Activated CD4-positive, alpha-beta memory T cell treated with anti-CD3 and anti-CD28 coated beads for 36 hours (primary cell): ENCODE measurements at regions of chr9 and their contacts with region 1.

Region 1: DNA sequence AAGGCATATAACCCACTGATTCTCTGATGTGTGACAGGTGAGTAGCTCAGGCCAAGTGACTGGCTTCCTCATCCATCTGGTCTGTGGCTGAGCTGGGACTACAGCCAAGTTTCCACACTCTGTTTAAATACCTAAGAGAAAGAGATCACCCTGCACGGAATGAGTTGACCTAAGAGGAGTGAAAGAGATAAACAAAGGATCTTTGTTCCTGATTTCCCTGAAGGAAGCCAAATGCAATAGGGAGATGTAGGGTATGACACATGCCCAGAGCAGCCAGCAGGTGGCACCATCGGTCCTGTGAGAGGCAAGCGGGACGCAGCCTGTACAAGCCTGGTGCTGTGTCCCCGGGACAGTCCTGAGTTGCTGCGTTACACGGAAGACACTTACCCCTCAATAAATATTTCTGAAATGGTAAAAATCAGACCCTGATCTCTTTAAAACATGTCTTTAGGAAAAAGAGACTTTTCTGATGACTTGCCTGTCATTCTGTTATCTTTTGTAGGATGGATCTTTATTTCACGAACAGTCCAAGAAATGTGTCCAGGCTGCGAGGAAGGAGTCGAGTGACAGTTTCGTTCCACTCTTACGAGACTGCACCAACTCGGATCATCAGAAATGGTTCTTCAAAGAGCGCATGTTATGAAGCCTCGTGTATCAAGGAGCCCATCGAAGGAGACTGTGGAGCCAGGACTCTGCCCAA is 41.1 kb downstream of the GALNT12 start:
- DNase-seq: peak; percentile 86
- H3K4me3 Mint-ChIP-seq: no peak overlapping the region
- H3K27ac Mint-ChIP-seq: no peak overlapping the region
- H3K4me1 Mint-ChIP-seq: peaks cover 10% of the 10 kb centered on the region
- H3K27me3 Mint-ChIP-seq: no peaks in the 10 kb centered on the region

Region 2: GRCh38 chr9:98830554-98830953 is 18.0 kb before region 1 on chr9:
- CTCF ChIA-PET with region 1: interaction called, 15 read pairs
- POLR2A ChIA-PET with region 1: no interaction called
- intact Hi-C with region 1: no loop called
- DNase-seq: no peak
- H3K4me3 Mint-ChIP-seq: no peak overlapping the region
- H3K27ac Mint-ChIP-seq: no peak overlapping the region
- H3K4me1 Mint-ChIP-seq: no peaks in the 10 kb centered on the region
- H3K27me3 Mint-ChIP-seq: no peaks in the 10 kb centered on the region

Region 3: DNA sequence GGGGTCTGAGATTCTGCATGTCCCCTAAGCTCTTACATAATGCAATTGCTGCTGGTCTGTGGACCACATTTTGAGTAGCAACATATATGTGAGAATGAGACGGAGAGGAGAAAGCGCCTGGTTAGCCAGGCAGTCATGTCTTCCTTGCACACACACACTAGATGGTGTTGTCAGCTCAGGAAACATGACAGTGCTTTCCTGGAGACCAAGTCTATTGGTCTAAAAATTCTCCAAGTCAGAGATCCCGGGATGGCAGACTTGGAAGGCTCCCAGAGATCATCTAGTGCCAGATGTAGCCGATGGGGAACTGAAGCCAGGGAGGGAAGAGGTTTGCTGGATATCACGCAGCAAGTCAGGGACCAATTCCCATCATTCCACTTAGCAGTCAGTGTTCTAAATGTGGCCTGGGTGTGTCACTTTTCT is 12.3 kb after region 1 on chr9:
- CTCF ChIA-PET with region 1: interaction called, 23 read pairs
- POLR2A ChIA-PET with region 1: no interaction called
- intact Hi-C with region 1: no loop called
- DNase-seq: no peak
- H3K4me3 Mint-ChIP-seq: no peak overlapping the region
- H3K27ac Mint-ChIP-seq: no peak overlapping the region
- H3K4me1 Mint-ChIP-seq: no peaks in the 10 kb centered on the region
- H3K27me3 Mint-ChIP-seq: peaks cover 23% of the 10 kb centered on the region

Region 4: DNA sequence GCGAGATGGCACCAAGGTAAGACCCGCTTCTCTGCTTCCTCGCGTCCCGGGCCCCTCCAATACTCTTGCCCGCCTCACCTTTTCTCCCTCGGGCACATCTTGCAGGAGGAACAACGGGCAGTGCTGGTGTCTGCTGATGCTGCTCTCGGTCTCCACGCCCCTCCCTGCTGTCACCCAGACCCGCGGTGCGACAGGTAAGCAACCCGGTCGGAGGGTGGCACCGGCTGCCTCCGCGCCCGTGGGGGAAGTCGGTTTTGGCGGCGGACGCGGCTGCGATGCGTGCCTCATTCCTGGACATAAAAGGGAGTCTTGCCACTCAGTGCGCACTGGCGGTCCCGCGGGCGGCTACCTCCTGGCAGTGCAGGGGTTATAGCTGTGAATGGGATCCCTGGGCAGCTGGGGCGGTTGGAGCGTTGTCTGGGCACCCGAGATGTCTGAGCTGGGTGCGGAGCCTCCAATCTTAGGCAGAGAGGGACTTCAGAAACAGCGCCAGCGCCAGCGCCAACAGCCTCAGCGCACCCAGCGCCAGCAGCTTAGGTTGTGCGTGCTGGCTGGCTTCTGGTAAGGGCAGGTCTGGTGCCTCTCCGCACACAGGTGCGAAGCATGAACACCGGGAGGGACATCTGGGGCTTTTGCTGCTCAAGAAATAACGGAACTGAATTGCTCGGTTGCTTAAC is 95.6 kb after region 1 on chr9:
- CTCF ChIA-PET with region 1: no interaction called
- POLR2A ChIA-PET with region 1: no interaction called
- intact Hi-C with region 1: no loop called
- DNase-seq: no peak
- H3K4me3 Mint-ChIP-seq: peak overlapping the region; percentile 23
- H3K27ac Mint-ChIP-seq: no peak overlapping the region
- H3K4me1 Mint-ChIP-seq: peaks cover 7% of the 10 kb centered on the region
- H3K27me3 Mint-ChIP-seq: peaks cover 49% of the 10 kb centered on the region

Region 5: GRCh38 chr9:98974994-98975712 is 126.6 kb after region 1 on chr9:
- CTCF ChIA-PET with region 1: interaction called, 26 read pairs
- POLR2A ChIA-PET with region 1: no interaction called
- intact Hi-C with region 1: no loop called
- DNase-seq: peak; percentile 87
- H3K4me3 Mint-ChIP-seq: no peak overlapping the region
- H3K27ac Mint-ChIP-seq: no peak overlapping the region
- H3K4me1 Mint-ChIP-seq: peaks cover 6% of the 10 kb centered on the region
- H3K27me3 Mint-ChIP-seq: peaks cover 8% of the 10 kb centered on the region

Region 6: DNA sequence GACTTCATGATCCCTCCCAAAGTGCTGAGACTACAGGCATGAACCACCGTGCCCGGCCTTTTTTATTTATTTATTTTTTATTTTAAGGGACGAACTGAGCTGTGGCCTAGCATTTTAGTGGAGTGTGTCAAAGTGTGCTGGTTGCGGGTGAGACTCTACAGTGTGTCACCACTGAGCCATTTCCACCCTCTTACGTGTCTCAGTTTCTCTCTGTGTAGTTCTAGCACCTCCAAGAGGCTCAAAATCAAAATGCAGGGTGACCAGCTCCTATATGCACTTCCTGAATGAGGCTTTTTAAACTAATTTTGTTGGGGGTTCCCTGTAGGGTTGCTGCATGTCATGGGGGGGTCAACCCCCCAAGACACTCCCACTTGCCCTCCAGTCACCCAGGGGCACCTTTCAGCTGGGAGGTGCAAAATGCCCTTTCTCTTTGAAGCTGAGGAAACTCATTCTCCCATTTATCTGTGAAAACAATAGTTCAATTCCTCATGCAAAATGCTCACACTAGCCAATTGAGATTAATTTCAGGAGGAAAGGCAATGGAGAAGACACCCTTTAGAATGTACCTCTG is 164.4 kb after region 1 on chr9:
- CTCF ChIA-PET with region 1: interaction called, 61 read pairs
- POLR2A ChIA-PET with region 1: no interaction called
- intact Hi-C with region 1: no loop called
- DNase-seq: peak; percentile 32
- H3K4me3 Mint-ChIP-seq: no peak overlapping the region
- H3K27ac Mint-ChIP-seq: peak overlapping the region; percentile 55
- H3K4me1 Mint-ChIP-seq: peaks cover 18% of the 10 kb centered on the region
- H3K27me3 Mint-ChIP-seq: no peaks in the 10 kb centered on the region